ENCODE measurements at regions of chr10 and their contacts with region 1.

Region 1: GRCh38 chr10:60343254-60343653 is 46.4 kb downstream of the ANK3 start:
- DNase-seq: peak; percentile 59
- ATAC-seq: peak; percentile 72
- H3K4me3 ChIP-seq: no peak overlapping the region
- H3K27ac ChIP-seq: no peak overlapping the region
- H3K4me1 ChIP-seq: peaks cover 18% of the 10 kb centered on the region
- H3K27me3 ChIP-seq: no peaks in the 10 kb centered on the region
- CTCF ChIP-seq: no peak

Region 2: GRCh38 chr10:59382831-59383295 is 960.4 kb before region 1 on chr10:
- CTCF ChIA-PET with region 1: no interaction called
- POLR2A ChIA-PET with region 1: no interaction called
- intact Hi-C with region 1: no loop called
- DNase-seq: no peak
- ATAC-seq: no peak
- H3K4me3 ChIP-seq: no peak overlapping the region
- H3K27ac ChIP-seq: no peak overlapping the region
- H3K4me1 ChIP-seq: peaks cover 11% of the 10 kb centered on the region
- H3K27me3 ChIP-seq: peaks cover 17% of the 10 kb centered on the region
- CTCF ChIP-seq: no peak

Region 3: GRCh38 chr10:60291344-60291930 is 51.8 kb before region 1 on chr10:
- CTCF ChIA-PET with region 1: no interaction called
- POLR2A ChIA-PET with region 1: no interaction called
- intact Hi-C with region 1: no loop called
- DNase-seq: no peak
- ATAC-seq: no peak
- H3K4me3 ChIP-seq: no peak overlapping the region
- H3K27ac ChIP-seq: no peak overlapping the region
- H3K4me1 ChIP-seq: peaks cover 6% of the 10 kb centered on the region; the same call in 1 of the 2 replicates
- H3K27me3 ChIP-seq: no peaks in the 10 kb centered on the region
- CTCF ChIP-seq: no peak

Region 4: DNA sequence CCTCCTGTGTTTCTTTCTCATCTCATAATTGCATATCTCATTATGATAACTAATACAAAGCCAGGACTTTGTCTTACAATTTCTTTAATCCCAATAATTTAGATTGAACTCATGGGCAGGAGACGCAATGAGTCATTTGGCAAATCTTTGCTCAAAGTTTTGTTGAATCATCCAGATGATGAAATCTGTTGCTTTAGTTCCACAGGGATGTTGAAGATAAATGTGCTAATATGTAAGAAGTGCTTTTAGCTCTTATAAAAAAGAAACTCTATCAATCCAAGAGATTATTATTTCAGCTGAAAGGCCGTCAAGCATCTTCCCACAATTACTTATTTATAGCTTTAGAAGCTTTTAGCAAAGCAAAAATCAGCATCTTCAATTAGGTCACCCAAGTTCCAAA is 83.1 kb after region 1 on chr10:
- CTCF ChIA-PET with region 1: no interaction called
- POLR2A ChIA-PET with region 1: no interaction called
- intact Hi-C with region 1: loop called (anchors 2 kb)
- DNase-seq: peak; percentile 98
- ATAC-seq: peak; percentile 30
- H3K4me3 ChIP-seq: 0 out of 2 replicates have a peak overlapping the region, but pooled peaks have one; percentile 5
- H3K27ac ChIP-seq: peak overlapping the region; percentile 93
- H3K4me1 ChIP-seq: peaks cover 92% of the 10 kb centered on the region
- H3K27me3 ChIP-seq: no peaks in the 10 kb centered on the region
- CTCF ChIP-seq: no peak

Measured in PC-3 (cell line).